AG04449 (cell line): ENCODE measurements at regions of chr3 and their contacts with region 1.

Region 1: GRCh38 chr3:58630076-58630709 is 36.4 kb downstream of the FAM3D start:
- DNase-seq: no peak
- H3K4me3 ChIP-seq: no peak overlapping the region
- CTCF ChIP-seq: peak; percentile 79

Region 2: GRCh38 chr3:58532794-58533220 is 97.4 kb before region 1 on chr3:
- CTCF ChIA-PET with region 1: interaction called, 19 read pairs
- POLR2A ChIA-PET with region 1: no interaction called
- DNase-seq: no peak
- H3K4me3 ChIP-seq: no peak overlapping the region
- CTCF ChIP-seq: peak; percentile 93

Region 3: GRCh38 chr3:58560771-58561311 is 69.4 kb before region 1 on chr3:
- CTCF ChIA-PET with region 1: interaction called, 646 read pairs
- POLR2A ChIA-PET with region 1: interaction called, 3 read pairs
- DNase-seq: peak; percentile 94
- H3K4me3 ChIP-seq: no peak overlapping the region
- CTCF ChIP-seq: peak; percentile 65

Region 4: DNA sequence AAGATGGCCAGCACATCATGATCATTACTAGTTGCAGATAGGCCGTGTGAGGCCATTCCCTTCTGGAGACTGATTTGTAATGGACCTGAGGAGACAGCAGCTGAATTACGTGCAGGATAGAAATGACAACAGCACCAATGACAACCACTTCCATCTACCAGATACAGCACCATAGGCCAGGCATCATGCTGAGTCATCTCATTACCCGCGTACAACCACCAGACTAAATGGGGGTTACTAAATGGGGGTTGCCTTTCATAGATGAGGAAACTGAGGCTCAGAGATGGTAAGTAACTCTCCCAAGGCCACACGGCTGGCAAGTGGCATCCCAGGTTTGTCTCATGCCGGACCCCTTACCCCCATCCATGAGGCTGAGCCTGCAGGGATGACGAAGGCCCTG is 20.2 kb before region 1 on chr3:
- CTCF ChIA-PET with region 1: interaction called, 79 read pairs
- POLR2A ChIA-PET with region 1: no interaction called
- DNase-seq: no peak
- H3K4me3 ChIP-seq: no peak overlapping the region
- CTCF ChIP-seq: no peak

Region 5: DNA sequence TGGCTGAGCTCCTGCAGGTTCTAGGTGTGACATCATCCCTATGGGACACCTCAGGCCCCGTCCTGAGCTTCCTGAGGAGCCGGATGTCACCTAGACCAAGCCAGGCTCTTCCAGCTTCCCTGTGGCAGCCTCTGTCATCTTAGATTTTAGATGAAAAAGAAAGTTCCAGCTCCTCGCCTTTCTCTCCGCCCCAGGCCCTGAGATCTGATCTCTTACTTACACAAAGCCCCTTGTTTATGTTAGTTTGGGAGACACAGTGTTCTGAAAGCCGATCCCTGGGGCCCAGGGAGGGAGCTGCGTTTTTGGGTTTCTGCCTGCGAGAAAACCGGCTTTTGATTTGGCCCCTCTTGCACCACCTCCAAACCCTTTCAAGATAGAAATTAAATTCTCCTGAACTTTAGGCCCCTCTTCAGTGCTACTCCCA is 12.8 kb before region 1 on chr3:
- CTCF ChIA-PET with region 1: interaction called, 79 read pairs
- POLR2A ChIA-PET with region 1: no interaction called
- DNase-seq: no peak
- H3K4me3 ChIP-seq: no peak overlapping the region
- CTCF ChIP-seq: no peak

Region 6: DNA sequence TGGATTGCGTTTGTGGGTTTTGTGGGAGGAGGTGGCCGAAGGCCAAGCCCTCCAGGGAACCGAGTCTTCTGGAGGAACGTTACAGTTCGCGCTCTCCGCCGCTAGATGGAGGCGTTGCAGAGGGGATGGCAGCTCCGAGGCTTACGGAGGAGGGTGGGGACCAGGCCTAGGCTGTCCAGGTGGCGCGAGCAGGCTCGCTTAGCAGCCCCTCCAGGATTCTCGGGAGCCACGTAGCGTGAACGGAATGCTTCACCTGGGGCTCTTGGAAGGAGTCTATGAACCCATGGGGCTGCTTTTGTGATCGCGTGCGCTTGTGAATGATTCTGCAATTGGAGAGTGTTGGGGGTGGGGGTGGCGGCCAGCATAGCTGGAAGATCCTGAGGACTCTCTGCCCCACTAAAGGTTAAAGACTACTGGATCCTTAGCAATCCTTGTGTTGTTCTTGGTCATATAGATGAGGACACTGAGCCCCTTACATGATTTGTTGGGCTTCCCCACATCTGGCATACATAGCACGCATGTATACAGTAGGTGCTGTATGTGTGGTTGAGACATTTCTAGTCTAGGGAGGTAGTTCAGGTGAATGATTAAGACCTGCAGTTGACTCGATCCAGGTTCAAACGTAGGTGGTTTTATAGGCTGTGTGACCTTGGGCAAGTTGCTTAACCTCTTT is 10.6 kb after region 1 on chr3:
- CTCF ChIA-PET with region 1: interaction called, 126 read pairs
- POLR2A ChIA-PET with region 1: no interaction called
- DNase-seq: no peak
- H3K4me3 ChIP-seq: no peak overlapping the region
- CTCF ChIP-seq: peak; percentile 96

Region 7: GRCh38 chr3:58704745-58705144 is 74.6 kb after region 1 on chr3:
- CTCF ChIA-PET with region 1: no interaction called
- POLR2A ChIA-PET with region 1: no interaction called
- DNase-seq: no peak
- H3K4me3 ChIP-seq: no peak overlapping the region
- CTCF ChIP-seq: no peak